ENCODE measurements at regions of chr17 and their contacts with region 1.

Region 1: GRCh38 chr17:57255776-57256681 is at the start of gene MSI2:
- DNase-seq: peak; percentile 81
- ATAC-seq: peak; percentile 70
- H3K4me3 ChIP-seq: peak within 1 kb of the TSS; percentile 78
- H3K27ac ChIP-seq: 0 out of 2 replicates have a peak within 1 kb of the TSS, but pooled peaks have one; percentile 7
- H3K4me1 ChIP-seq: peaks cover 16% of the 10 kb centered on the region
- H3K27me3 ChIP-seq: no peaks in the 10 kb centered on the region
- CTCF ChIP-seq: no peak
- total RNA-seq, gene MSI2: 54.7 and 60.4 TPM in 2 replicates

Region 2: DNA sequence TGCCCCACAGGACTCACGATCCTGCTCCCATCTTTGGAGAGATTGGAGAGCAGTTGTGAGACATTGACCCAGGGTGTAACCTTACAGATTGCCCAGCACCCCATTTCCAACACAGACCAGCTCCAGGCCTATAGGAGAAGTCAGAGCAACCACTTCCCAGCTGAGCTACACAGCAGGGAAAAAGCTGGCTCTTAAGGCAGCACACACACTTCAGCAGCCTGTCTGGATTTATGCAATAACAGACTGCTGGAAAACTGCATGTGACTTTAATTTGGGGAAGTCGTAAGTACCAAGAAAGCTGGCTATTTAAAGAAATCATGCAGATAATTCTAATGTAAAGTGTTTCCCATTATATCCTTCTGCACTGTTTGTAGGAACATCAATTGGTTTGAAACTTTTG is 631.7 kb before region 1 on chr17:
- CTCF ChIA-PET with region 1: no interaction called
- POLR2A ChIA-PET with region 1: no interaction called
- intact Hi-C with region 1: no loop called
- DNase-seq: no peak
- ATAC-seq: no peak; the same call in 1 of the 2 replicates
- H3K4me3 ChIP-seq: no peak overlapping the region
- H3K27ac ChIP-seq: no peak overlapping the region
- H3K4me1 ChIP-seq: peaks cover 3% of the 10 kb centered on the region; the same call in 1 of the 2 replicates
- H3K27me3 ChIP-seq: no peaks in the 10 kb centered on the region
- CTCF ChIP-seq: no peak

Region 3: GRCh38 chr17:57166717-57167198 is 89.3 kb before region 1 on chr17:
- CTCF ChIA-PET with region 1: no interaction called
- POLR2A ChIA-PET with region 1: no interaction called
- intact Hi-C with region 1: no loop called
- DNase-seq: peak; percentile 80
- ATAC-seq: peak; percentile 93
- H3K4me3 ChIP-seq: peak overlapping the region; percentile 27; the same call in 1 of the 2 replicates
- H3K27ac ChIP-seq: peak overlapping the region; percentile 10; the same call in 1 of the 2 replicates
- H3K4me1 ChIP-seq: peaks cover 14% of the 10 kb centered on the region
- H3K27me3 ChIP-seq: no peaks in the 10 kb centered on the region
- CTCF ChIP-seq: no peak

Region 4: GRCh38 chr17:57357399-57357807 is 101.4 kb after region 1 on chr17:
- CTCF ChIA-PET with region 1: no interaction called
- POLR2A ChIA-PET with region 1: no interaction called
- intact Hi-C with region 1: loop called (anchors 5 kb)
- DNase-seq: peak; percentile 67
- ATAC-seq: peak; percentile 62
- H3K4me3 ChIP-seq: no peak overlapping the region
- H3K27ac ChIP-seq: peak overlapping the region; percentile 89
- H3K4me1 ChIP-seq: peaks cover 24% of the 10 kb centered on the region
- H3K27me3 ChIP-seq: no peaks in the 10 kb centered on the region
- CTCF ChIP-seq: no peak

Region 5: GRCh38 chr17:57422574-57423164 is 166.6 kb after region 1 on chr17:
- CTCF ChIA-PET with region 1: no interaction called
- POLR2A ChIA-PET with region 1: no interaction called
- intact Hi-C with region 1: loop called (anchors 5 kb)
- DNase-seq: peak; percentile 87
- ATAC-seq: peak; percentile 57
- H3K4me3 ChIP-seq: no peak overlapping the region
- H3K27ac ChIP-seq: peak overlapping the region; percentile 86
- H3K4me1 ChIP-seq: peaks cover 59% of the 10 kb centered on the region
- H3K27me3 ChIP-seq: no peaks in the 10 kb centered on the region
- CTCF ChIP-seq: no peak

Region 6: GRCh38 chr17:57518587-57519581 is 262.9 kb after region 1 on chr17:
- CTCF ChIA-PET with region 1: interaction called, 4 read pairs
- POLR2A ChIA-PET with region 1: no interaction called
- intact Hi-C with region 1: loop called (anchors 5 kb)
- DNase-seq: peak; percentile 74
- ATAC-seq: peak; percentile 45
- H3K4me3 ChIP-seq: no peak overlapping the region
- H3K27ac ChIP-seq: peak overlapping the region; percentile 31
- H3K4me1 ChIP-seq: peaks cover 32% of the 10 kb centered on the region
- H3K27me3 ChIP-seq: no peaks in the 10 kb centered on the region
- CTCF ChIP-seq: no peak

Region 7: GRCh38 chr17:57662644-57663308 is 406.7 kb after region 1 on chr17:
- CTCF ChIA-PET with region 1: no interaction called
- POLR2A ChIA-PET with region 1: no interaction called
- intact Hi-C with region 1: loop called (anchors 5 kb)
- DNase-seq: peak; percentile 100
- ATAC-seq: peak; percentile 98
- H3K4me3 ChIP-seq: peak overlapping the region; percentile 44
- H3K27ac ChIP-seq: peak overlapping the region; percentile 83
- H3K4me1 ChIP-seq: peaks cover 20% of the 10 kb centered on the region
- H3K27me3 ChIP-seq: no peaks in the 10 kb centered on the region
- CTCF ChIP-seq: peak; percentile 24; the same call in 1 of the 2 replicates

Measured in PC-3 (cell line).